ENCODE measurements at regions of chr16 and their contacts with region 1.

Region 1: GRCh38 chr16:83967806-83968305 is at the start of gene NECAB2:
- DNase-seq: peak in 4 of 5 donors; percentile 49 to 74 (median 66)
- H3K4me3 ChIP-seq: no peak within 1 kb of the TSS
- H3K27ac ChIP-seq: peak within 1 kb of the TSS in 1 of 2 donors; percentile 38
- H3K4me1 ChIP-seq: no peaks in the 10 kb centered on the region
- H3K27me3 ChIP-seq: no peaks in the 10 kb centered on the region
- CTCF ChIP-seq: peak; percentile 16 to 42 (median 21)
- EP300 ChIP-seq: no peak
- POLR2A ChIP-seq: no peak
- total RNA-seq, gene NECAB2: 0.20 to 0.50 (median 0.37) TPM in 3 of 7 donors, not detected in the others

Region 2: GRCh38 chr16:84013787-84014569 is 46.1 kb after region 1 on chr16:
- intact Hi-C with region 1: no loop called
- DNase-seq: no peak
- H3K4me3 ChIP-seq: no peak overlapping the region
- H3K27ac ChIP-seq: no peak overlapping the region
- H3K4me1 ChIP-seq: no peaks in the 10 kb centered on the region
- H3K27me3 ChIP-seq: no peaks in the 10 kb centered on the region
- CTCF ChIP-seq: no peak
- EP300 ChIP-seq: no peak
- POLR2A ChIP-seq: no peak

Region 3: GRCh38 chr16:84048270-84048669 is 80.4 kb after region 1 on chr16:
- intact Hi-C with region 1: loop called in 1 of 4 experiments (anchors 5 kb)
- DNase-seq: peak in 1 of 5 donors; percentile 7
- H3K4me3 ChIP-seq: no peak overlapping the region
- H3K27ac ChIP-seq: no peak overlapping the region
- H3K4me1 ChIP-seq: no peaks in the 10 kb centered on the region
- H3K27me3 ChIP-seq: no peaks in the 10 kb centered on the region
- CTCF ChIP-seq: no peak
- EP300 ChIP-seq: no peak
- POLR2A ChIP-seq: no peak

Region 4: GRCh38 chr16:84062734-84063640 is 95.1 kb after region 1 on chr16:
- intact Hi-C with region 1: loop called in 1 of 4 experiments (anchors 10 kb)
- DNase-seq: peak; percentile 53 to 81 (median 71)
- H3K4me3 ChIP-seq: no peak overlapping the region
- H3K27ac ChIP-seq: no peak overlapping the region
- H3K4me1 ChIP-seq: no peaks in the 10 kb centered on the region
- H3K27me3 ChIP-seq: no peaks in the 10 kb centered on the region
- CTCF ChIP-seq: peak; percentile 41 to 59 (median 51)
- EP300 ChIP-seq: no peak
- POLR2A ChIP-seq: no peak

Region 5: GRCh38 chr16:84175350-84176081 is 207.7 kb after region 1 on chr16:
- intact Hi-C with region 1: loop called in 2 of 4 experiments (anchors 10 kb)
- DNase-seq: peak in 3 of 5 donors; percentile 51 to 78 (median 61)
- H3K4me3 ChIP-seq: no peak overlapping the region
- H3K27ac ChIP-seq: peak overlapping the region in 1 of 2 donors; percentile 44
- H3K4me1 ChIP-seq: peaks cover 16% of the 10 kb centered on the region
- H3K27me3 ChIP-seq: no peaks in the 10 kb centered on the region
- CTCF ChIP-seq: peak in 1 of 3 donors; percentile 68
- EP300 ChIP-seq: no peak
- POLR2A ChIP-seq: peak; percentile 16

Region 6: DNA sequence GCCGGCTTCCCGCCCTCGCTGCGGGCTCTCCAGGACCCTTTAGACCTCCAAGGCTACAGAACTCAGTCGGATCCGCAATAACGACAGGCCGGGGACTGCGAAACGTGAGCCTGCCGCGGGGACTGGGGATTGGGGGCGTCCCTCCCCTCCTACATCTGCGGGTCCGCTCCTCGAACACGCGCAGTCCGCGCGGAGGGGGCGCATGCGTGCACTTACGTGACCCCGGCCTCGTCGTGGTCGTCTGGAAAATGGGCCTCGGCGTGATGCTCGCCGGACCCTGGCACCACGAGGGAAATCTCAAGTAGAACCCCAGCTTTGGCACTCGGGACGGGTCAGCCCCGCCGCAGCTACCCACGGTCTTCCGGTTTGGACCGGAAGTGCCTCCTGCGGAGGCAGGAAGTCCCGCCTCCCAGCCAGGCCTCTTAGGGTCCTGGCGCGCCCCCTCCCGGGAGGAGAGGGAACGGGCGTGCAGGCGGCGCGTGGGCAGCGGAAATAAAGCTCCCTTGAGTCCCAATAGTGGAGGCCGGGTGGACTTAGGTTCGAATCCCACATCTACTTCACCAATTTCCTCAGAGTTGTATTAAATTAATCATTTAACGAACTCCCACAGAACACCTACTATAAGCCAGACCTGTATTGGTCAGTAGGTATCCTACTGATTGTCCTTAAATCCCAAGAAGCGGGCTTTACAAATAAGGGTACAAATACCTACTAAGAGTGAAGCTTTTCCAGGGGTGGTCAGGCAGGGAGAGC is 219.0 kb after region 1 on chr16 and contains the start of gene TAF1C:
- intact Hi-C with region 1: loop called in 1 of 4 experiments (anchors 10 kb)
- DNase-seq: peak; percentile 87 to 96 (median 93)
- H3K4me3 ChIP-seq: peak within 1 kb of the TSS; percentile 82
- H3K27ac ChIP-seq: peak within 1 kb of the TSS; percentile 36 to 53
- H3K4me1 ChIP-seq: peaks cover 9% of the 10 kb centered on the region
- H3K27me3 ChIP-seq: no peaks in the 10 kb centered on the region
- CTCF ChIP-seq: peak; percentile 95 to 98 (median 97)
- EP300 ChIP-seq: no peak
- POLR2A ChIP-seq: peak; percentile 24
- total RNA-seq, gene TAF1C: 39.7 to 89.0 (median 58.4) TPM

Region 7: DNA sequence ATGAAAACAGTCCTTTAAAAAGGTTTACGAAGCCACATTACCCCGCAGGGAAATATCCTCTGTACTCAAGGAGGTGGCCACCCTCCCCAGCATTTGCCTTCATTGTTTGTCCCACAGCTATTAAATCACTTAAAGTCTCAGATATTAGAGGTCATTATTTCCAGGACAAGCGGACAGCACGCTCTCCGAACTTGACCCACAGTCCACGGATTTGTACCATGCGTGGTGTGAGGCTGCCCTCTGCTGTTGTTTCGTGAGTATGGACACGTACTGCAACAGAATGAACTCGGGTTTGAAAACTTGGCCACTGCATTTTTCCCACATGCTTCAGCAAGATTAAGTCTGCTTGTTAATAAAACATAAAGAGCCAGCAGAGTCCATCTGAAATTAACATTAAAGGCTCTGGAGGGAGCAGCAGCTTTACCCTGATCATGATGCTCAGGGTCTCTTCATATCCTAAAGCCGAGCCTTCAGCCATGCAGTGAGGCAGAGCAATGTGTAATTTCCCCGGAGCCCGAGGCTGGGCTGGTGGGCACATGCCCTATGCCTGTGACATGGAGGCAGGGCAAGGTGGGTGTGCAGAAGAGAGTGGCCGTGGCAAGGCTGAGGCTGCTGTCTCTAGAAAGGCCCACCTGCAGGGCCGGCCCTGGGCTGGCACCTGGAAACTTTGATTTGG is 516.9 kb after region 1 on chr16:
- intact Hi-C with region 1: loop called in 2 of 4 experiments (anchors 5 to 10 kb)
- DNase-seq: peak; percentile 60 to 84 (median 80)
- H3K4me3 ChIP-seq: no peak overlapping the region
- H3K27ac ChIP-seq: no peak overlapping the region
- H3K4me1 ChIP-seq: no peaks in the 10 kb centered on the region
- H3K27me3 ChIP-seq: no peaks in the 10 kb centered on the region
- CTCF ChIP-seq: peak; percentile 35 to 83 (median 79)
- EP300 ChIP-seq: no peak
- POLR2A ChIP-seq: no peak

Measured in ovary (tissue), 10 donors.